Gastrocnemius medialis (tissue), 4 donors: ENCODE measurements at regions of chr4 and their contacts with region 1.

Region 1: GRCh38 chr4:85790582-85790981 is 315.6 kb downstream of the ARHGAP24 start:
- DNase-seq: no peak
- ATAC-seq: no peak
- H3K4me3 ChIP-seq: no peak overlapping the region
- H3K27ac ChIP-seq: no peak overlapping the region
- H3K4me1 ChIP-seq: no peaks in the 10 kb centered on the region
- H3K27me3 ChIP-seq: no peaks in the 10 kb centered on the region
- CTCF ChIP-seq: no peak
- POLR2A ChIP-seq: no peak

Region 2: GRCh38 chr4:85979276-85979675 is 188.7 kb after region 1 on chr4:
- in situ Hi-C with region 1: loop called in 2 of 4 experiments (anchors 10 to 25 kb)
- intact Hi-C with region 1: no loop called
- DNase-seq: no peak
- ATAC-seq: no peak
- H3K4me3 ChIP-seq: no peak overlapping the region
- H3K27ac ChIP-seq: no peak overlapping the region
- H3K4me1 ChIP-seq: no peaks in the 10 kb centered on the region
- H3K27me3 ChIP-seq: no peaks in the 10 kb centered on the region
- CTCF ChIP-seq: no peak
- POLR2A ChIP-seq: no peak

Region 3: DNA sequence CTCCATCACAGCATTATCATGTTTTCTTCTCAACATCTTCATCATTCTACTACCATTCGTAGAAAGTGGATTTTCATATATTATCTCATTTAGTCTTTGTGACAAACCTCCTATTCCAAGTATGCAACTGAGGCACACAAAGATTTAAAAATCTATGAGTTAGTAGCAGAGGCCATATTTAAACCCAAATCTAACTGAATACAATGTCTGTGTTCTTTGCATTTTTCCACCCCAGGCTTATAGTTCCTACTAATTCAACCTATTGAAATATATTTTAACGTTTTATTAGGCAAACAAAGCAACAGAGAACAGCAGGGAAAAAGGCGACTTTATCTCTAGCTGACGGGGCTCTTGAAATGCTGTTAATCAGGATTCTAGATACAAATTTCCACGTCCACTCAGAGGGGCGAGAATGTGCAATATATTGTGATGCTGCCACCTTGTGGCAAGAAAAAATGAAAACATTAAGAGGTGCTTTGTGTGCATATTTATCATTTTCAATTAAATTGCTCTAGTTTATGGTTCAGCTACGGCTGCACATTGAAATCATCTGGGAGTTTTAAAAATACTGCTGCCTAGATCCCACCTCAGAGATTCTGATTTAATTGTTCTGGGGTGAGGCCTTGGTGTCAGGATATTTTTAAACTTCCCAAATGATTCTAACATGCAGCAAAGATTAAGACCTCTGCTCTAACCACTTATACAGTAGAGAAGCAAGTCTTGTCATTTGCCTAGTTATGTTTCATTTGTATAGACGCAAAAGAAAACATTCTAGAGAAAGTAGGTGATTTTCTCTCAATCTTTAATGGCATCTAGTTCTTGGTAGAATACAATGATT is 253.4 kb after region 1 on chr4:
- in situ Hi-C with region 1: no loop called
- intact Hi-C with region 1: loop called (anchors 10 kb)
- DNase-seq: no peak
- ATAC-seq: peak; percentile 46 to 56
- H3K4me3 ChIP-seq: no peak overlapping the region
- H3K27ac ChIP-seq: no peak overlapping the region
- H3K4me1 ChIP-seq: peaks cover 0 to 4% of the 10 kb centered on the region in 2 donors
- H3K27me3 ChIP-seq: no peaks in the 10 kb centered on the region
- CTCF ChIP-seq: peak; percentile 28 to 68 (median 56)
- POLR2A ChIP-seq: no peak